ENCODE measurements at regions of chr13 and their contacts with region 1.

Region 1: DNA sequence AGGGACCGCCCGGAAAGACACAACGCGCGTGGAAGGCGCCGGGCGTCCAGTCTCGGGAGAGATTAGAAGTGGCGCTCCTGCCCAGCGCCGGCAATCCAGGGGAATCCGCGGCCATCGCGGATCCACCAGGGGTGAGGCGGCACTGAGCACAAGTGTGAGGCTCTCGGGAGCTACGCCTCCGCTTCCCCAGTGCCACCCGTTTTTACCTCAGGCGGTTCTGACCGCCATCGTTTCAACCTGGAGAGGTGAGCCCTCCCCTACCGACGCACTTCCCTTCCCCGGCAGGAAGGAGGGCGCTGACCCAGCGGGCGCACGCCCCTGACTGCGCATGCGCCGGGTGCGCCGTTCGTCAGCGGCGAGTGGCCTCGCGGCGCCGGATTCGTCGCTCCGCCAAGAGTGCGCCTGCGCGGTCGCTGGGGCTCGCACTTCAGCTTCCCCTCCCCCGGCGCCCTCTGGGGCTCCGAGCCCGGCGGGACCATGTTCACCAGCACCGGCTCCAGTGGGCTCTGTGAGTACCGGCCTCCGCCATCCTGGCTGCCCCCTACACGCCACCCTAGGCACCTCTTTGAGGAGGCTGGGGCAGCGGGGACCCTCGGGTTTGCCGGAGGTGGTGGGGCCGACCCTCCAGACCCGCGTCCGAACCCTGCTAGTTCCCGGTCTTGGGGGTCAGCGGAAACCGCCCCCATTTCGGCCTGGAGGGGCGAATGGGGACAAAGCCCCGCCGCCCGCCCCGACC is at the start of gene UBAC2:
- DNase-seq: peak; percentile 89
- ATAC-seq: peak; percentile 91
- H3K4me3 ChIP-seq: peak within 1 kb of the TSS; percentile 79 to 99 (median 96)
- H3K27ac ChIP-seq: peak within 1 kb of the TSS; percentile 83
- H3K4me1 ChIP-seq: peaks cover 40% of the 10 kb centered on the region
- H3K27me3 ChIP-seq: no peaks in the 10 kb centered on the region
- CTCF ChIP-seq: 0 out of 2 replicates have a peak, but pooled peaks have one; percentile 11
- EP300 ChIP-seq: 0 out of 4 replicates have a peak, but pooled peaks of 1 of the 2 experiments have one; percentile 2
- POLR2A ChIP-seq: peak; percentile 96 to 98
- RAD21 ChIP-seq: peak; percentile 38; the same call in 1 of the 2 replicates
- total RNA-seq, gene UBAC2: 44.0 and 61.3 TPM in 2 replicates

Region 2: GRCh38 chr13:98358933-98359332 is 841.7 kb before region 1 on chr13:
- CTCF ChIA-PET with region 1: no interaction called
- POLR2A ChIA-PET with region 1: no interaction called
- in situ Hi-C with region 1: no loop called
- intact Hi-C with region 1: no loop called
- DNase-seq: no peak
- ATAC-seq: no peak
- H3K4me3 ChIP-seq: no peak overlapping the region
- H3K27ac ChIP-seq: no peak overlapping the region
- H3K4me1 ChIP-seq: no peaks in the 10 kb centered on the region
- H3K27me3 ChIP-seq: no peaks in the 10 kb centered on the region
- CTCF ChIP-seq: no peak
- EP300 ChIP-seq: no peak
- POLR2A ChIP-seq: no peak
- RAD21 ChIP-seq: no peak

Region 3: DNA sequence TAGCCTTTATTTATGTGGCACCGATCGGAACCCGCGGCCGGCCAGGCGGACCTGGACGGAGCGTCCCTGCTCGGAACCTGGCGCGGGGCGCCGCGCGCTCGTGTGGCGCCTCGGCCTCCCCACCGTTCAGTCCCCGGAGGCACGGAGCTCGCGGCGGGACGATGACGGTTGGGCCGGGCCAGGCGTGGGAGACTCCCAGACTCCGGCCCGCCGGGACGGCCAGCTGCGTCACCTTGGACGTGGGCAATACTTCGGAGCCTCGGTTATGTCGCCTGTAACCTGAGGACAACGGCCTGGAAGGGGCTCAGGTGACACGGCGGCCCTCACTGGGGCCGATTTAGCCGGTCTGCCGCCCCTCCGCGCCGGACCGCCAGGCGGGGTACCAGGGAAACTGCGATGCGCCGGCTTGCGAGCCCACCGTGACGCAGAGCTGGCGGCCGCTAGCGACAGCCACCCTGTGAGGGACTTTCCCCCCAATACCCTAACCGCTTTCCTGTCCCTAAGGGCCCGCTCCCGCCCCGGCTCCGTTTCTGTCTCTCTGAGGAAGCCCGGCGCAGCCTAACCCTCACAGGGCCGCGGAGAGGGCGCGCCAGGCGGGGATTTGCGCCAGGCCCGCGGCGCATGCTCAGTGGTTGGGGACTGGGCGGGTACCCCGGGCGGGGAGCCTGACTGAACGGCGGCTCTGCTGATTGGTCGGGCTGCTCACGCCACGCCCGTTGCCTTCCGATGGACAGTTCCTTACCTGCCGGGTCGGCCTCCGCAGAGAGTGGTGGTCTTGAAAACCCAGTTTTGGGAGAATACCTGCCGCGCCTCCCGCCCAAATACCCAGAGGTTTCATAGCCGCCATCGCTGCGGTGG is 113.3 kb before region 1 on chr13:
- CTCF ChIA-PET with region 1: no interaction called
- POLR2A ChIA-PET with region 1: no interaction called
- in situ Hi-C with region 1: no loop called
- intact Hi-C with region 1: no loop called
- DNase-seq: peak; percentile 59
- ATAC-seq: peak; percentile 94
- H3K4me3 ChIP-seq: peak overlapping the region; percentile 54 to 77 (median 58)
- H3K27ac ChIP-seq: no peak overlapping the region
- H3K4me1 ChIP-seq: peaks cover 7% of the 10 kb centered on the region
- H3K27me3 ChIP-seq: peaks cover 1 to 39% of the 10 kb centered on the region in 2 experiments; a peak in 4 of 5 replicates
- CTCF ChIP-seq: 0 out of 2 replicates have a peak, but pooled peaks have one; percentile 9
- EP300 ChIP-seq: no peak
- POLR2A ChIP-seq: no peak
- RAD21 ChIP-seq: no peak

Region 4: DNA sequence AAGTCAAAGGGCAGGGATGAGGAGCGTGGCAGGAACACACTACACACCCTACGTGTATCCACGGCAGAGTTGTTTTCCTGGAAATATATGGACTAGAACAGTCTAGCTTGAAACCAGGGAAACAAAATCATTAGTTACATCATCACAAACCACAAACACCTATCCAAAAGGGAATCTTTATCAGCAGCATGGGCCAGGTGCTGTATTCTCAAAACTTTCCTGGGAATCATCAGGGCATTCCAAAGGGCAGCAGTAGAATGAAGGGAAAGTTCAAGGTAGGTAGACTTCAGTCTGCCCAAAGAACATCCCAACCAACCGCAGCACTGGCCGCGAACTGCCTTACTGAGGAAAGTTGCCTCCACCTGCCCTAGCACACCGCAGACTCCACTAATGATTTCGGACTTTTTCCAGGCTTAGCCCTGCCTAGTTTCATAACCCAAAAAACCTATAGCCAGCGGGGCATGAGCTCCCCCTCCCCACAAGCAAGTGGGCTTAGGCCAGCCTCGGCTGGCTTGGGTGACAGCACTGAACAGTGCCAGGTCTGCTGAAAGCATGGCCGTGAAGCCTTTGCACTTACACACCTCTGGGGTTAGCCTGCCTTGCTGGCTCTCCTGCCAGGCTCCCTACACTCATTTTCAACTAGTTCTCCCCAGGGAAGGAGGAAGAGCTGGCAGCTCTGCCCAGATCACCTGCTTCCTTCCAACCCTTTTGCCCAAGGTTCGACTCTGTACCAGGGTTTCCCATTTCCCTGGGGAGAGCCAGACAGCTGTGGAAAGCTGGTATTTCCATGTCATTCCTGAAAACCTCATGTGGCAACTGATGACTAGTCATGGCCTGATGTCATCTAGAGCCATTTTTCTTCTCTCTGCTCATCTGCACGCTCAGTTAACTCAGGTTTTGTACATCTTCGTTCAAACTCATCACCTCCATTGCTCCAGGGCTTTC is 77.2 kb before region 1 on chr13:
- CTCF ChIA-PET with region 1: no interaction called
- POLR2A ChIA-PET with region 1: no interaction called
- in situ Hi-C with region 1: no loop called
- intact Hi-C with region 1: no loop called
- DNase-seq: no peak
- ATAC-seq: peak; percentile 40; the same call in 2 of the 3 replicates
- H3K4me3 ChIP-seq: no peak overlapping the region
- H3K27ac ChIP-seq: no peak overlapping the region
- H3K4me1 ChIP-seq: no peaks in the 10 kb centered on the region
- H3K27me3 ChIP-seq: peaks cover 0 to 14% of the 10 kb centered on the region in 2 experiments; a peak in 3 of 5 replicates
- CTCF ChIP-seq: no peak
- EP300 ChIP-seq: no peak
- POLR2A ChIP-seq: no peak
- RAD21 ChIP-seq: no peak

Region 5: DNA sequence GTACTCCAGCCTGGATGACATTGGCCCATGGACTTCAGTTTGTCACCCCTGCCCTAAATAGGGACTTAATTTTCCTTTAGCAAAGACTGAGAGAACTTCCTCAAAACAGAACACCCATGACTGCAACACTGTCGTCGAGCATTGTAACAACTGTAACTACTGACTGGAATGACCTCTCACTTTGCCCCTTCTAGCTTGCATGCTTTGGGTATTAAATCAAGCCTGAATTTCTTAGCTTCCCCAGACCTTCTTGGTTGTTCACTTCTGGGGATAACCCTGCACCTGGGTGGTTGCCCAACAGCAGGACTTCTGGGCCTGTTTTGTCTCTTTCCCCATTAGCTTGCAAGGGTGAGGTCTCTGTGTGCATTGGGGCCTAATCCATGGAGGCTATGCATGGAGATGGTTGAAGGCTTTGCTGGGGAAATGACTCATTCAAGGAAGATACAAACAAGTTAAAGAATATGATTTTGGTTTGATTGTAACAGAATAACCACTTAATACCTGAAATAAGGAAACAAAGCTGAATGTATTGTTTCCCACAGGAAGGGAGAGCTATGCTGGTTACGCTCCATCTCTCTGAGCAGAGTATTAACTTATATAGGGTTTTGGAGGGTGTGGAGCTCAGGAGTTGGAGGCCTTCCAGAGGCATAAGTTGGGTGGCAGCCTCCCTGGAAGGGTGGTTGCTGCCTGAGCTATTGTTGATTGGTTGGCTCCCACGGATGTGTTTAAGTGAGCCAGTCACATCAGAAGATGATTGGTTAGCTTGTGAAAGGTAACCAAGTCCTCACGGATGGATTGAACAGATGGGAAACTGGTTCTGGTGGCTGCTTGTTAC is 34.6 kb before region 1 on chr13:
- CTCF ChIA-PET with region 1: no interaction called
- POLR2A ChIA-PET with region 1: no interaction called
- in situ Hi-C with region 1: no loop called
- intact Hi-C with region 1: no loop called
- DNase-seq: no peak
- ATAC-seq: no peak
- H3K4me3 ChIP-seq: no peak overlapping the region
- H3K27ac ChIP-seq: no peak overlapping the region
- H3K4me1 ChIP-seq: no peaks in the 10 kb centered on the region
- H3K27me3 ChIP-seq: no peaks in the 10 kb centered on the region
- CTCF ChIP-seq: no peak
- EP300 ChIP-seq: no peak
- POLR2A ChIP-seq: no peak
- RAD21 ChIP-seq: no peak

Region 6: GRCh38 chr13:99185606-99186005 is 15.0 kb before region 1 on chr13:
- CTCF ChIA-PET with region 1: no interaction called
- POLR2A ChIA-PET with region 1: interaction called, 16 read pairs
- in situ Hi-C with region 1: no loop called
- intact Hi-C with region 1: no loop called
- DNase-seq: no peak
- ATAC-seq: no peak
- H3K4me3 ChIP-seq: no peak overlapping the region
- H3K27ac ChIP-seq: no peak overlapping the region
- H3K4me1 ChIP-seq: 0 out of 2 replicates have a peak, but pooled peaks cover 9% of the 10 kb centered on the region
- H3K27me3 ChIP-seq: no peaks in the 10 kb centered on the region; a peak in 1 of 5 replicates
- CTCF ChIP-seq: no peak
- EP300 ChIP-seq: no peak
- POLR2A ChIP-seq: no peak
- RAD21 ChIP-seq: no peak

Region 7: DNA sequence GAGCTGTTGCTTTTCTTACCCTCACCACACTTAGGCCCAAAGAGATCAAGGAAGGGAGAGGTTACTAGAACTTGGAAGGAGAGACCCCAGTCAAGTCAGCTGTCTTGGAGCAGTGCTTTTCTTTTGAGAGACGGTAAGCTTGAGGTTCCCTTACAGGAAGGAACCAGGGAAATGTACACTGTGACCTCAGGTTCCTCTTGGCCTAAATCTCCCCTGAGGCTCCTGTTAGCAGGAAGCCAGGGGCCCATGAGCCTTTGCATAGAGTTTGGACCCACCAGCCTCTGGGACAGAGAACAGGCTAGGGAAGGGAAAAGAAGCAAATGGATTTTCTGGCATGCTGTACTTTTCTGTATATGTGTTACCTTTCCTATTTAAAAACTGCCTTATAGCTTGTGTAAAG is 63.5 kb after region 1 on chr13:
- CTCF ChIA-PET with region 1: interaction called, 5 read pairs
- POLR2A ChIA-PET with region 1: interaction called, 5 read pairs
- in situ Hi-C with region 1: no loop called
- intact Hi-C with region 1: loop called (anchors 1 kb)
- DNase-seq: no peak
- ATAC-seq: no peak
- H3K4me3 ChIP-seq: no peak overlapping the region
- H3K27ac ChIP-seq: no peak overlapping the region
- H3K4me1 ChIP-seq: peaks cover 30% of the 10 kb centered on the region
- H3K27me3 ChIP-seq: no peaks in the 10 kb centered on the region
- CTCF ChIP-seq: no peak
- EP300 ChIP-seq: no peak
- POLR2A ChIP-seq: no peak
- RAD21 ChIP-seq: no peak

Region 8: GRCh38 chr13:99269627-99270241 is 69.1 kb after region 1 on chr13:
- CTCF ChIA-PET with region 1: interaction called, 5 read pairs
- POLR2A ChIA-PET with region 1: interaction called, 3 read pairs
- in situ Hi-C with region 1: no loop called
- intact Hi-C with region 1: loop called (anchors 1 kb)
- DNase-seq: peak; percentile 25
- ATAC-seq: peak; percentile 71
- H3K4me3 ChIP-seq: no peak overlapping the region
- H3K27ac ChIP-seq: no peak overlapping the region
- H3K4me1 ChIP-seq: no peaks in the 10 kb centered on the region
- H3K27me3 ChIP-seq: no peaks in the 10 kb centered on the region
- CTCF ChIP-seq: peak; percentile 58
- EP300 ChIP-seq: no peak
- POLR2A ChIP-seq: no peak
- RAD21 ChIP-seq: no peak; the same call in 1 of the 2 replicates

Region 9: DNA sequence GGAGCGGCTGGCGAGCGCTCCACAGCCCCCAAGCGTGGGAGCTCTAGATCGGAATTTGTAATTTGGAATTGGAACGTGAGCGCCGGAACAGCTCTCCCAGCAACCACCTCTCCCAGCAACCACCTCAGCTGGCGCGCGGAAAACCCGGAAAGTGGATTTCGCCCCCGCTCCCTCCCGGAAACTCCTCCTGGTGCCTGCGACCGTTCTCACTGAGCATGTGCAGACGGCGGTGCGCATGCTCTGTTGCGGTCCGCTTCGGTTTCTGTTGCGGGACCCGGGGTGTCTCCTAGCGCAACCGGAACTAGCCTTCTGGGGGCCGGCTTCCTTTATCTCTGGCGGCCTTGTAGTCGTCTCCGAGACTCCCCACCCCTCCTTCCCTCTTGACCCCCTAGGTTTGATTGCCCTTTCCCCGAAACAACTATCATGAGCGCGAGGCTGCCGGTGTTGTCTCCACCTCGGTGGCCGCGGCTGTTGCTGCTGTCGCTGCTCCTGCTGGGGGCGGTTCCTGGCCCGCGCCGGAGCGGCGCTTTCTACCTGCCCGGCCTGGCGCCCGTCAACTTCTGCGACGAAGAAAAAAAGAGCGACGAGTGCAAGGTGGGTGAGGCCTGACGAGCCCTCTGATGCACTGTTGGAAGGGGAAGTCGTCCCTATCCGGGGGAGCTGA is 300.7 kb after region 1 on chr13 and contains the start of gene TM9SF2:
- CTCF ChIA-PET with region 1: no interaction called
- POLR2A ChIA-PET with region 1: interaction called, 8 read pairs
- in situ Hi-C with region 1: no loop called
- intact Hi-C with region 1: loop called (anchors 5 kb)
- DNase-seq: peak; percentile 92
- ATAC-seq: peak; percentile 61
- H3K4me3 ChIP-seq: peak within 1 kb of the TSS; percentile 72 to 89 (median 84)
- H3K27ac ChIP-seq: peak within 1 kb of the TSS; percentile 88
- H3K4me1 ChIP-seq: peaks cover 68% of the 10 kb centered on the region
- H3K27me3 ChIP-seq: no peaks in the 10 kb centered on the region; a peak in 1 of 5 replicates
- CTCF ChIP-seq: 0 out of 2 replicates have a peak, but pooled peaks have one; percentile 7
- EP300 ChIP-seq: 0 out of 4 replicates have a peak, but pooled peaks of 1 of the 2 experiments have one; percentile 40
- POLR2A ChIP-seq: peak; percentile 59 to 61
- RAD21 ChIP-seq: peak; percentile 19; the same call in 1 of the 2 replicates
- total RNA-seq, gene TM9SF2: 74.2 and 123 TPM in 2 replicates